Activated B cell treated with CpG ODN at 0.5 μM for 24 hours (primary cell): ENCODE measurements at regions of chr19 and their contacts with region 1.

Region 1: DNA sequence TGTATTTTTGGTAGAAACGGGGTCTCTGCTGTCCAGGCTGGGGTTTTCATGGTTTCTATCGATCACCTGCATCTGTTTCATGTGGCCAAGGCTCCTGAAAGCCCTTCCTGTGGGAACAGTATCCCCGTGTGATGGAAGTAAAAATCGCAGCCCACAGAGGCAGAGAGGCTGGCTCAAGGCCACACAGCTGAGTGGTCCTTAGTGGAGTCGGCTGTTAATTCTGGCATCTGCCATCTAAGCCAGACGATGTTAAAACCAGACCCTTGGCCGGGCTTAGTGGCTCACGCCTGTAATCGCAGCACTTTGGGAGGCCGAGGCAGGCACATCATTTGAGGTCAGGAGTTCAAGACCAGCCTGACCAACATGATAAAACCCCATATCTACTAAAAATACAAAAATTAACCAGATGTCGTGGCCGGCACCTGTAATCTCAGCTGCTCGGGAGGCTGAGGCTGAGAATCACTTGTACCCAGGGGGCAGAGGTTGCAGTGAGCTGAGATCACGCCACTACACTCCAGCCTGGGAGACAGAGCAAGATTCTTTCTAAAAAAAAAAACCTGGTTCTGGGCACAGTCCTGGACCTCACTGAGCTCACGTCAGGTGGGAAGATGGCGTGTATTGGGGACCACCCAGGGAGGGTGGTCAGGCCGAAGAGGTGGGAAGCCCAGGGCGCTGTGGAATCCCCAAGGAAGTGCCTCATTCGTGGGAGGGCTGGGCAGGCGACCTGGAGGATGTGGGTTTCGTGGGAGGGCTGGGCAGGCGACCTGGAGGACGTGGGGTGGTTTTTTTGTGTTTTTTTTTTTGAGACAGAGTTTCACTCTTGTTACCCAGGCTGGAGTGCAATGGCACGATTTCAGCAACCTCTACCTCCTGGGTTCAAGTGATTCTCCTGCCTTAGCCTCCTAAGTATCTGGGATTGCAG is 18.5 kb upstream of the MISP start:
- DNase-seq: no peak
- ATAC-seq: no peak
- H3K4me3 Mint-ChIP-seq: no peak overlapping the region
- H3K27ac Mint-ChIP-seq: no peak overlapping the region
- H3K4me1 Mint-ChIP-seq: peaks cover 4% of the 10 kb centered on the region
- H3K27me3 Mint-ChIP-seq: peaks cover 2% of the 10 kb centered on the region
- CTCF ChIP-seq: no peak

Region 2: GRCh38 chr19:588093-588740 is 144.2 kb before region 1 on chr19:
- CTCF ChIA-PET with region 1: interaction called, 22 read pairs
- POLR2A ChIA-PET with region 1: no interaction called
- intact Hi-C with region 1: loop called (anchors 1 kb)
- DNase-seq: peak; percentile 38
- ATAC-seq: peak; percentile 41
- H3K4me3 Mint-ChIP-seq: no peak overlapping the region
- H3K27ac Mint-ChIP-seq: no peak overlapping the region
- H3K4me1 Mint-ChIP-seq: peaks cover 8% of the 10 kb centered on the region
- H3K27me3 Mint-ChIP-seq: peaks cover 8% of the 10 kb centered on the region
- CTCF ChIP-seq: no peak

Region 3: GRCh38 chr19:680287-681028 is 52.0 kb before region 1 on chr19:
- CTCF ChIA-PET with region 1: interaction called, 5 read pairs
- POLR2A ChIA-PET with region 1: no interaction called
- intact Hi-C with region 1: loop called (anchors 5 kb)
- DNase-seq: peak; percentile 95
- ATAC-seq: peak; percentile 80
- H3K4me3 Mint-ChIP-seq: peak overlapping the region; percentile 95
- H3K27ac Mint-ChIP-seq: peak overlapping the region; percentile 98
- H3K4me1 Mint-ChIP-seq: peaks cover 14% of the 10 kb centered on the region
- H3K27me3 Mint-ChIP-seq: peaks cover 4% of the 10 kb centered on the region
- CTCF ChIP-seq: no peak